Activated CD4-positive, alpha-beta T cell treated with anti-CD3 and anti-CD28 coated beads for 36 hours (primary cell): ENCODE measurements at regions of chr5 and their contacts with region 1.

Region 1: GRCh38 chr5:71475788-71476384 is 20.4 kb downstream of the BDP1 start:
- DNase-seq: no peak
- ATAC-seq: peak; percentile 76
- H3K4me3 Mint-ChIP-seq: no peak overlapping the region
- H3K27ac Mint-ChIP-seq: no peak overlapping the region
- H3K4me1 Mint-ChIP-seq: no peaks in the 10 kb centered on the region
- H3K27me3 Mint-ChIP-seq: no peaks in the 10 kb centered on the region

Region 2: DNA sequence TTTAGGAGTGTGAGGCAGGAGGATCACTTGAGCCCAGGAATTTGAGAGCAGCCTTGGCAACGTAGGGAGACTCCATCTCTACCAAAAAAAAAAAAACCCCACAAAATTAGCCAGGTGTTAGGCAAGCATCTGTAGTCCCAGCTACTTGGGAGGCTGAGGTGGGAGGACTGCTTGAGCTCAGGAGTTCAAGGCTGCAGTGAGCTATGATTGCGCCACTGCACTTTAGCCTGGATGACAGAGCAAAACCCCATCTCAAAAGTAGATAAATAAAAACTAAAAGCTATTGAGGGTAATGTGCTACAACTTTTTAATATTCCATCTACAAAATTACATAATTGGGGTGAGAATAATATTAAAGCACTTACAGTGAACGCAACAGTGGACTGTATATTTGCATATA is 14.5 kb before region 1 on chr5:
- CTCF ChIA-PET with region 1: interaction called, 18 read pairs
- POLR2A ChIA-PET with region 1: interaction called, 4 read pairs
- intact Hi-C with region 1: no loop called
- DNase-seq: no peak
- ATAC-seq: no peak
- H3K4me3 Mint-ChIP-seq: no peak overlapping the region
- H3K27ac Mint-ChIP-seq: no peak overlapping the region
- H3K4me1 Mint-ChIP-seq: peaks cover 15% of the 10 kb centered on the region
- H3K27me3 Mint-ChIP-seq: no peaks in the 10 kb centered on the region

Region 3: GRCh38 chr5:71533614-71534013 is 57.7 kb after region 1 on chr5:
- CTCF ChIA-PET with region 1: no interaction called
- POLR2A ChIA-PET with region 1: no interaction called
- intact Hi-C with region 1: loop called in 1 of 2 experiments (anchors 10 kb)
- DNase-seq: no peak
- ATAC-seq: peak; percentile 89
- H3K4me3 Mint-ChIP-seq: no peak overlapping the region
- H3K27ac Mint-ChIP-seq: peak overlapping the region; percentile 59
- H3K4me1 Mint-ChIP-seq: peaks cover 10% of the 10 kb centered on the region
- H3K27me3 Mint-ChIP-seq: no peaks in the 10 kb centered on the region

Region 4: DNA sequence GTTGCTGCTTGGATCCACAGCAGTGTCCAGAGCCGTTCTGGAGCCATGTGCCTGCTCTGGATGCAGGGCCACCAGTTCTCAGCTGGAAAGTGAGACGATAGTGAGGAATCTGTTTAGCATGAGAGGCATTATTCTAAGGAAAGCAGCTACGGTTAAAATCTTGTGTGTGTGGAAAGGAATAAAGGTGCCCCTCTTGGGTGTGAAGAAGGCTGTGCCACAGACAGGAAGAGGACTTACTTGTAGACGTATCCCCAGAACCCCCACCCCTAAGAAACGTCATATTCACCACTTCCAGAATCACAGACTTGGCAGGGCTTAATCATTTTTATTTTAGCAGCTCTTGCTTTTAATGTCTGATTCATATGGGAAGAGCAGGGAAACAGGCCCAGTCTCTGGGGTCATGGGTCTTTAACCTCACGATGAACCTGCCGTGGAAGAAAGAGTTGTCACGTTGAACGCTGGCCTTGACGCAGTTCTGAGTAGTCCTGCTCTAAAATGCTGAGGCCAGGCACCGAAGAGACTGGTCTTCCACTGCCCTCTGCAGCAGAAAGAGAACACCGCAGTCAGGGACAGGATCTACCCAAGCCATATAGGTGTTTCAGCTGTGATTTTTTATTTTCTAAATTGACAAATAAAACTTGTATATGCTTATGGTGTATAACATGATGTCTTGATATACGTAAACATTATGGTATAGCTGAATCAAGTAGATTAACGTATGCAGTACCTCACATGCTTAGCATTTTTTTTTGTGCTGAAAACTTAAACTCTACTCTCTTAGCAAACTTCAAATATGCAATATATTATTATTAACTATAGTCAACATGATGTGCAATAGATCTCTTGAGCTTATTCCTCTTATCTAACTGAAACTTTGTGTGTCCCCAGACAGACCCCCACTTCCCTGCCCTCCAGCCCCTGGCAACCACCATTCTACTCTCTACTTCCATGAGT is 282.0 kb after region 1 on chr5:
- CTCF ChIA-PET with region 1: no interaction called
- POLR2A ChIA-PET with region 1: no interaction called
- intact Hi-C with region 1: loop called in 1 of 2 experiments (anchors 5 kb)
- DNase-seq: peak; percentile 67
- ATAC-seq: peak; percentile 90
- H3K4me3 Mint-ChIP-seq: no peak overlapping the region
- H3K27ac Mint-ChIP-seq: no peak overlapping the region
- H3K4me1 Mint-ChIP-seq: peaks cover 5% of the 10 kb centered on the region
- H3K27me3 Mint-ChIP-seq: peaks cover 4% of the 10 kb centered on the region